ENCODE measurements at regions of chr11 and their contacts with region 1.

Region 1: GRCh38 chr11:78886616-78887015 is 312.0 kb upstream of the NARS2 start:
- DNase-seq: peak; percentile 96
- H3K4me3 Mint-ChIP-seq: no peak overlapping the region
- H3K27ac Mint-ChIP-seq: no peak overlapping the region
- H3K4me1 Mint-ChIP-seq: peaks cover 11% of the 10 kb centered on the region
- H3K27me3 Mint-ChIP-seq: no peaks in the 10 kb centered on the region
- CTCF ChIP-seq: no peak

Region 2: DNA sequence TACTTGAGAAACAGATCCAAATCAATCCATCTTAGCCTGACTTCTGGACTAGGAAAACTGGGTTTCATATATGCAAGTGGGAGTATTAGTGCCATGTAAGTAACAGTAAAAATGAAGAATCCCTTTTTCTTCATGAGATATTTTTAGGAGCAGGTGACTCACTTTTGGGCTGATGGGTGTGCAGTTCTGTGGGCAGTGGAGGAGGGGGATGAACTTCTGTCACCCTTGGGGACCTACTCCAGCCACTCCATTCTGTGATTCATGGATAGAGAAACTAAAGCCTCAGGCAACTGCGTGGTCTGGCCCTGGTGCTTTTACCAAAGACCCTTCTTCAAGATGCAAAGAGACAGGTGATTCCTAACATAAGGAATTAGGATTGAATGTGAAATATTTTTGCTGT is 103.3 kb before region 1 on chr11:
- CTCF ChIA-PET with region 1: no interaction called
- POLR2A ChIA-PET with region 1: no interaction called
- intact Hi-C with region 1: no loop called
- DNase-seq: no peak
- H3K4me3 Mint-ChIP-seq: no peak overlapping the region
- H3K27ac Mint-ChIP-seq: no peak overlapping the region
- H3K4me1 Mint-ChIP-seq: peaks cover 13% of the 10 kb centered on the region
- H3K27me3 Mint-ChIP-seq: no peaks in the 10 kb centered on the region
- CTCF ChIP-seq: no peak

Region 3: GRCh38 chr11:78898266-78898775 is 11.7 kb after region 1 on chr11:
- CTCF ChIA-PET with region 1: interaction called, 8 read pairs
- POLR2A ChIA-PET with region 1: interaction called, 10 read pairs
- intact Hi-C with region 1: no loop called
- DNase-seq: no peak
- H3K4me3 Mint-ChIP-seq: no peak overlapping the region
- H3K27ac Mint-ChIP-seq: no peak overlapping the region
- H3K4me1 Mint-ChIP-seq: no peaks in the 10 kb centered on the region
- H3K27me3 Mint-ChIP-seq: no peaks in the 10 kb centered on the region
- CTCF ChIP-seq: no peak